ENCODE measurements at regions of chr11 and their contacts with region 1.

Region 1: DNA sequence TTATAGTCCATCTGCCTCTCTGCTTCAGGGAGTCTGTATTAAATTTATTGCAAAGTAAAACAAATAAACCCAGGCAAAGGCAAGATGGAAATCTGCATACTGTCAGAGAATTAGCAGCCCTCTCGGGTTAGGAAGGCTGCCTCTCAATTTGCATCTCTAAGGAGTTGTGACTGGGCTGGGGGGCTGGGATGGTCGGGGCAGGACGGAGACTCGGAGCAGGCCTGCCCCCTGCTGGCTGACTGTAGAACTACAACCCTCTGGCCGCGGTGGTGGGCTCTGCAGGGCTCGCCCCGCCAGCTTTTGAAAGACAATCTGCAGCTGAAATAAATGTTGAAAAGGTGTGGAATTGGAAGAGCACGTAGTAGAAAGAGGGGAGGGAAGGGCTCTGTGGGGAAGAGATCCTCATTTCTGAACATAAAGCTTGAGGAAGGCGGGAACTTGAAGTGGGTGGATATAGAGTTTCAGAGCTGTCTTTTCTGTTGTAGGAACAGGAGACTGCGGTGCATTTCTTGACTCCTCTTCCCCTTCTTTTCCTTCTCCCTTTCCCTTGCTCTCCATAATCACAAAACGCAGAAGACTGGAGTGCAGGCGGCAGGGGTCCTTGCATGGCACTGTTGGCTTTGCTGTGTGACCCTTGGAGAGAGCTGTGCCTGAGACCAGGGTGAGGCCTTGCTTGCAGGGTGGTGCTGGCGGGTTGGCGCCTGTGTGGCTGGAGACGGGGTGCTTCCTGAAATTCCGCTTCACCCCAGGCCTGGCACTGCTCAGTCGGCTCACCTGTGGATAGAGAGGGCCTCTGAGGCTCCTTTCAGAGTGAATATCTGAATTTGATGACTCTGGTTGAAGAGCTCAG is 22.6 kb upstream of the PKNOX2 start:
- DNase-seq: peak; percentile 51
- H3K4me3 Mint-ChIP-seq: no peak overlapping the region
- H3K27ac Mint-ChIP-seq: no peak overlapping the region
- H3K4me1 Mint-ChIP-seq: peaks cover 2% of the 10 kb centered on the region
- H3K27me3 Mint-ChIP-seq: peaks cover 25% of the 10 kb centered on the region

Region 2: GRCh38 chr11:124953753-124954589 is 187.9 kb before region 1 on chr11 and contains the start of gene CCDC15:
- CTCF ChIA-PET with region 1: interaction called, 19 read pairs
- POLR2A ChIA-PET with region 1: interaction called, 3 read pairs
- DNase-seq: peak; percentile 97
- H3K4me3 Mint-ChIP-seq: no peak within 1 kb of the TSS
- H3K27ac Mint-ChIP-seq: no peak within 1 kb of the TSS
- H3K4me1 Mint-ChIP-seq: peaks cover 20% of the 10 kb centered on the region
- H3K27me3 Mint-ChIP-seq: no peaks in the 10 kb centered on the region
- total RNA-seq, gene CCDC15: 9.2 to 9.7 TPM

Region 3: DNA sequence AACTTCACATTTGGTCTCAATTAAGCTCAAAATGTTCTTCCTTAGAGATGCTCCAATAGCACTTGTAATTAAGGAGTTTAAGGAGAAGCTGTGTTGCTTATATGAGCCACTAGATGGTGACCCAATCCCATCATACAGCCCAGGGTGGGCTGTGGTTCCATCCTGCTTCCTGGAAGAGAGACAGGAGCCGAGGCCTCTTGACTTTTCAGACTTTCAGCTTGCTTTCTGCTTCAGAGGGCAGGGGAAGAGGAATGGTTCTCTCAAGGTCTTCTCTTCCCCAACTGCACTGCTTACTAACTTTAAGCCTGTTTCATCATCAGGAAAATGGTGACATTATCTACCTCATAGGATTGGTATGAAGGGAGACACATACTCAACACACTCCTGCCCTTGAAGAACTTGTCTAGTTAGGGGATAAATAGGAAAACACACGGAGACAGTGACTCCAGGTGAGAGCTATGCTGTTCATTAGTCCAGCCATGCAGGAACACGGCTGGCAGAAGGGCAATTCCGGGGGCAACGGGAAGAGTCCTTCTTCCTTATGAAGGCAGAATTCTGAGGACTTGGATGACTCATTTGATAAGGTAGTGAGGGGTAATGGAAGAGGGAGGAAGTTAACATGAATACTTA is 50.5 kb before region 1 on chr11:
- CTCF ChIA-PET with region 1: interaction called, 21 read pairs
- POLR2A ChIA-PET with region 1: interaction called, 3 read pairs
- DNase-seq: no peak
- H3K4me3 Mint-ChIP-seq: no peak overlapping the region
- H3K27ac Mint-ChIP-seq: no peak overlapping the region
- H3K4me1 Mint-ChIP-seq: no peaks in the 10 kb centered on the region
- H3K27me3 Mint-ChIP-seq: no peaks in the 10 kb centered on the region

Region 4: DNA sequence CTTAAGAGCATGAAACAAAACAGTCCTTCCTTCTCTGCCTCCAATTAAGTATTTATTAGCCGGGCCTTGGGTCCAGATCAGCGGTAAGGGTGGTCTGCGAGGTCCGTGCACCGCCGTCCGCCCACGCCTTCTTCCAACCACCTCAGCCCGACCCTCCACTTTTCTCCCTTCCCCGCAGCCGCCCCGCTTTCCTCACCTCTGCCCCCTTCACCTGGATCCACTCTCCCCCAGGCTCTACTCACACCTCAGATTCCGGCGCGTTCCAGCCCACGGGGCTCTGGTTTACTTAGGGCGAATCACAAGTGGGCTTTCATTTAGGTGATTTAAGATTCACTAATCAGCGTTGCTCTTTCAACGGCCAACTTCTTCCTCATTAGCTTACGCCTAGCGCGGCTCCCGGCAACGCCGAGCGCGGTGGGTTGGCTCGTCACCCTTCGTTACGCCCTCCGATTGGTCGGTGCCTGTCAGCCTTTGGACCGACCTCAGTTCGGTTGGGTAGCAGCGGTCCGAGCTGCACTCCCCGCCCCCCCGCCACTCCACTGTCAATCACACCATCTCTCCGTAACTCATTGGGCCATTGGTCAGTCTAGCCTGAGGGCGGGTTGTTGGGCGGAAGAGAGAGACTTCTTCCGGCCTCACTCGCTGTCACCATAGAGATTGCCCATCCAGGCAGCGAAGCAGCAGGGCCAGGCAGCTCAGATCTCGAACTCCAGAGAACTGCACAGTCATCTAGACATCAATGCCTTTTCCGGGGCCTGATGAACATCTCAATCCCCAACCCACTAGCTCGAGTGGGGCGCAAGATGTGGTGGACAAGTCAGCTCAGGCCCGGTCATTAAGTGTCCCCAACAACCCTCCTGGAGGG is 30.3 kb before region 1 on chr11 and contains the start of gene TMEM218:
- CTCF ChIA-PET with region 1: interaction called, 10 read pairs
- POLR2A ChIA-PET with region 1: no interaction called
- DNase-seq: peak; percentile 98
- H3K4me3 Mint-ChIP-seq: peak within 1 kb of the TSS; percentile 94
- H3K27ac Mint-ChIP-seq: peak within 1 kb of the TSS; percentile 83
- H3K4me1 Mint-ChIP-seq: peaks cover 19% of the 10 kb centered on the region
- H3K27me3 Mint-ChIP-seq: peaks cover 2% of the 10 kb centered on the region
- total RNA-seq, gene TMEM218: 13.7 to 15.6 TPM

Region 5: GRCh38 chr11:125192183-125192582 is 50.3 kb after region 1 on chr11:
- CTCF ChIA-PET with region 1: no interaction called
- POLR2A ChIA-PET with region 1: no interaction called
- DNase-seq: no peak
- H3K4me3 Mint-ChIP-seq: no peak overlapping the region
- H3K27ac Mint-ChIP-seq: no peak overlapping the region
- H3K4me1 Mint-ChIP-seq: no peaks in the 10 kb centered on the region
- H3K27me3 Mint-ChIP-seq: peaks cover 39% of the 10 kb centered on the region

Measured in activated CD4-positive, alpha-beta memory T cell treated with anti-CD3 and anti-CD28 coated beads, Interleukin-2, amount 10 ng/mL, durations not matched to agents 7 days and 5 days (primary cell).